Mammary epithelial cell (primary cell): ENCODE measurements at regions of chr20 and their contacts with region 1.

Region 1: GRCh38 chr20:37527638-37528441 is at the start of gene BLCAP:
- DNase-seq: peak; percentile 82
- H3K4me3 ChIP-seq: peak within 1 kb of the TSS; percentile 80 to 97 (median 95)
- H3K27ac ChIP-seq: peak within 1 kb of the TSS; percentile 97
- H3K4me1 ChIP-seq: peaks cover 38% of the 10 kb centered on the region
- H3K27me3 ChIP-seq: no peaks in the 10 kb centered on the region
- CTCF ChIP-seq: no peak
- total RNA-seq, gene BLCAP: 106 to 196 TPM

Region 2: DNA sequence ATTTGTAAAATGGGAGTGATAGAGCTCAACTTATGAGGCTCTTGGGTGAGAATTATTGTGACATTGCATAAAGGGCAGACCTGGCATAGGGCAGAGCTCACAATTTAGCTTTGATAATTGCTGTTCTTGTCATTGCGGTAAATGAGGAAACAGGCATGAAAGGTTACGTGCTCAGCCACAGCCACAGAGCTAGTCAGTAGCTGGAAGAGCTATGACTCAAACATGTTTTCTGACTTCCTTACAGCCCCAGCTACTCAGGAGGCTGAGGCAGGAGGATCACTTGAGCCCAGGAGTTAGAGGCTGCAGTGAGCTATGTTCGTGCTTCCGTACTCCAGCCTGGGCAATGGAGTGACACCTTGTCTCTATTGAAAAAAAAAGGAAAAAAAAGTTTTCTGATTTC is 262.7 kb before region 1 on chr20:
- CTCF ChIA-PET with region 1: no interaction called
- dilution Hi-C with region 1: no loop called
- in situ Hi-C with region 1: loop called in 1 of 2 experiments (anchors 5 kb)
- intact Hi-C with region 1: no loop called
- DNase-seq: no peak
- H3K4me3 ChIP-seq: no peak overlapping the region
- H3K27ac ChIP-seq: no peak overlapping the region
- H3K4me1 ChIP-seq: peaks cover 4% of the 10 kb centered on the region
- H3K27me3 ChIP-seq: peaks cover 3% of the 10 kb centered on the region
- CTCF ChIP-seq: no peak

Region 3: DNA sequence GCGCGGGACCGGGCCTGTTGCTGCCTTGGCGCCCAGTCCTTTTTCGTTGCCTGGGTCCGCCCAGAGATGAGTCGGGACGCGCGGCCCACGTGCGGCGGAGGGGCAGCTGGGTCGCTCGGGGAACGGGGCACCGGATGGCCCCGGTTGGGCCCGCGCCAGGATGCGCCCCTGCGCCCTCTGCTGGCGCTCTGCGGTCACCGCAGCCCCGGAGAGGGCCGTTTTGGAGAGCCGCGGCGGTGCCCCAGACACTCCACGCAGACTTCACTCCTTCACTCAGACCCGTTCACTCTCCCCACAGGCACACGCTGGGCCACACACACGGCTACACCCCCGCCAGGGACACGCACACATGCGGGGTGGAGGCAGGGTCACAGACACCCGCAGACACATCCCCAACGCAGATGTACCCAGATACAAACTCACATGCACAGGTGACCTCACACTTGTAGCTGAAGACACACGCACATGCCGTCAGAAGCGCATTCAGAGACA is 143.1 kb before region 1 on chr20:
- CTCF ChIA-PET with region 1: no interaction called
- dilution Hi-C with region 1: no loop called
- in situ Hi-C with region 1: no loop called
- intact Hi-C with region 1: loop called (anchors 5 kb)
- DNase-seq: peak; percentile 30
- H3K4me3 ChIP-seq: no peak overlapping the region
- H3K27ac ChIP-seq: no peak overlapping the region
- H3K4me1 ChIP-seq: peaks cover 8% of the 10 kb centered on the region
- H3K27me3 ChIP-seq: no peaks in the 10 kb centered on the region
- CTCF ChIP-seq: peak; percentile 56 to 92

Region 4: GRCh38 chr20:37406010-37406998 is 121.5 kb before region 1 on chr20:
- CTCF ChIA-PET with region 1: no interaction called
- dilution Hi-C with region 1: no loop called
- in situ Hi-C with region 1: loop called in 1 of 2 experiments (anchors 5 kb)
- intact Hi-C with region 1: loop called (anchors 5 kb)
- DNase-seq: peak; percentile 18
- H3K4me3 ChIP-seq: peak overlapping the region; percentile 31 to 37 (median 35)
- H3K27ac ChIP-seq: no peak overlapping the region
- H3K4me1 ChIP-seq: peaks cover 15% of the 10 kb centered on the region
- H3K27me3 ChIP-seq: no peaks in the 10 kb centered on the region
- CTCF ChIP-seq: no peak

Region 5: DNA sequence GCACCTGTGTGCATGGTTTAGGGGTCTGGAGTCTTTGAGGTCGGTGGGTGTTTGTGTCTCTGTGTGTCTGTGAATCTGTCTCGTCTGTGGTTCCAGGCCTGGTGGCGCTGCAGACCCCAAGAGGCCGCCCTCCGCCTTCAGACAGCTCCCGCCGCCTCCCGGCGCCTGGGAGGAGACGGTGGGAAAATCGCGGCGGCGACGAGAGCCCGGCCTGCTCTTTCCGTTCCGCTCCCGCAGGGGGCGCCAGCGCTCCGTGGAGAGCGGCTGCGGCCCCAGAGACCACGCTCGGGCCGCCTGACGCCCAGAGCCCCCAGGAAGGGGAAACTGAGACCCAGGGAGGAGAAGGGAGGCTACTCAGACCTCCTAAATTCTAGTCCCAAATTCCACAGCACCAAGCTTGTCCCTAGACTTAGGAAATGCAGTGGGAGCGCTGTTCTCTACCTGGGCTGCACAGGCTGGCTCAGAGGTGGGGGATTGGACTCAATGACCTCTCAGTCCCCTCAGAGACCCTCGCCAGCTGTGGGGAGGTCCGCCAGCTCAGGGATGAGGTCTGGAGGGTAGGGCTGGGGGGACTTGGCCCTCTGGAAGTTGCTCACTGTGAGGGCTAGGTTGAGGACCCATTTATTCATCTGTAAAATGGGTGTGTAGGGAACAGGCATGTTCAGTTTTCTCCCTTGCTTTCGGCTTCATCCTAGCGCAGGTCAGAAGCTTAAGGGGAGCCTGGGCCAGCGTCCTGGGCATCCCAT is 36.7 kb after region 1 on chr20:
- CTCF ChIA-PET with region 1: no interaction called
- dilution Hi-C with region 1: no loop called
- in situ Hi-C with region 1: no loop called
- intact Hi-C with region 1: no loop called
- DNase-seq: peak; percentile 7
- H3K4me3 ChIP-seq: no peak overlapping the region
- H3K27ac ChIP-seq: no peak overlapping the region
- H3K4me1 ChIP-seq: no peaks in the 10 kb centered on the region
- H3K27me3 ChIP-seq: peaks cover 3% of the 10 kb centered on the region
- CTCF ChIP-seq: peak; percentile 57 to 96